Activated B cell treated with CpG ODN at 0.5 μM for 24 hours (primary cell): ENCODE measurements at regions of chr2 and their contacts with region 1.

Region 1: DNA sequence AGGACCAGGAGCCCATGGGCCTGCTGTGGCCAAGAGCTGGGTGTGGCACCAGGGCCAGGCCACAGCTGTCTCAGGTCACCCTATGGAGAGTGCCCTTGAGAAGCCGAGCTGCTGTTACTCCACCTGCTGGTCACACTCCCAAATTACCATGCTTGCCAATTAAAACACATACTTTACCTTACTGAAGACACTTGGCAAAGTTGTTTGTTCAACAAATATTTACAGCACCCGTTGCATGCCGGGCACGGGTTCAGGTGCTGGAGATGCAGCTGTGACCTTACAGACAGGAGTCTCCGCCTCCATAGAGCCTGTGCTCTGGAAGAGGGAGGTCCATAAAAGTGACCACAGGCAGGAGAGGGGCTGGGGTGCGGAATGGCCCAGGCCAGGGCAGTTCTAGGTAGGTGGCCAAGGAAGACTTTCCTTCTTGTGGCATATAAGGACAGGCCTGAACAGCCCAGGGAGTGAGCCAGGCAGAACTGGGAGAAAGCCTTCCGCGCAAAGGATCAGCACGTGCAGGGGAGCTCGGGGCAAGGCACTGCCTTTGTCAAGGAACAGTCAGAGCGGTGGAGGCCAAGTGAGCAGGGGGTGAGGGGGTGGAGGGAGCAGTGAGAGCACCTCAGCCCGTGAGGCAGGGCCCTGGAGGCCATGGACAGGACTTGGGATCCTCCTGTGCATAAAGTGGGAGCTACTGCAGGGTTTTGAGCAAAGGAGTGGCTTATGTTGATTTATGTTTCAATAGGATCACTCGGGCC is 23.6 kb upstream of the RBM44 start:
- DNase-seq: no peak
- ATAC-seq: peak; percentile 77
- H3K4me3 Mint-ChIP-seq: no peak overlapping the region
- H3K27ac Mint-ChIP-seq: no peak overlapping the region
- H3K4me1 Mint-ChIP-seq: no peaks in the 10 kb centered on the region
- H3K27me3 Mint-ChIP-seq: no peaks in the 10 kb centered on the region
- CTCF ChIP-seq: peak; percentile 48

Region 2: DNA sequence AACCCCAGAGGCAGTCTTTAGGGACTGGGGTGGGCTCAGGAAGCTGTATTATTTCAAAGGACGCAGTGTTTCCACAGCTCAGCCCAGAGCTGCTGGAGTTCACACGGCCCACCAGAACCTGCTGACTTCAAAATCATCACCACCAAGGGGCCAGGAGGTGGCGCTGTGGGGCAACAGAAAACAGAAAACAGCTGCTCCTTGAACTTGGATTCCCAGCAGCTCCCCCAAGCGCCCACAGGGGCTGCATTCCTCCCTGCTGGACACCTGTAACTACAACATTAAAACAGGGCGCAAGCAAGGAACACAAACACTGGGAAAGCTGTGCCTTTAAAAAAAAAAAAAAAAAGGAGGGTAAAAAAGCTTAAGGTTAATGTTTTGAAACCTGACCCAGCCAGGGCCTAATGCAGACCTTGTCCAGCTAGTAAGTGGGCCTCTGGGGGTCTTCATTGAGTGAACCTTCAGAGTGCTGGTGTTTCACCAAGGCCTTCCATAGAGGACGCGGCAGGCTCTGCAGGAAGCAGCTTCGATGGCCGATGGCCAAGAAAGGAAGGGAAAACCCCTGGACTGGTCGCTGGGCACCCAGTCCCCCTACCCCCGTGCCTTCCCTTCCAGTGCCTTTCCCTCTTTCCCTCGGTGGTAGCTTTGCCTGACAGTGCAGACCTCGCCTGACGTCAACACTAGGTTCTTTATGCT is 262.1 kb before region 1 on chr2:
- CTCF ChIA-PET with region 1: interaction called, 14 read pairs
- POLR2A ChIA-PET with region 1: no interaction called
- intact Hi-C with region 1: loop called (anchors 1 kb)
- DNase-seq: peak; percentile 58
- ATAC-seq: peak; percentile 64
- H3K4me3 Mint-ChIP-seq: no peak overlapping the region
- H3K27ac Mint-ChIP-seq: no peak overlapping the region
- H3K4me1 Mint-ChIP-seq: no peaks in the 10 kb centered on the region
- H3K27me3 Mint-ChIP-seq: peaks cover 5% of the 10 kb centered on the region
- CTCF ChIP-seq: no peak

Region 3: GRCh38 chr2:237581751-237582746 is 192.9 kb before region 1 on chr2:
- CTCF ChIA-PET with region 1: interaction called, 3 read pairs
- POLR2A ChIA-PET with region 1: no interaction called
- intact Hi-C with region 1: loop called (anchors 1 kb)
- DNase-seq: no peak
- ATAC-seq: peak; percentile 49
- H3K4me3 Mint-ChIP-seq: no peak overlapping the region
- H3K27ac Mint-ChIP-seq: no peak overlapping the region
- H3K4me1 Mint-ChIP-seq: peaks cover 2% of the 10 kb centered on the region
- H3K27me3 Mint-ChIP-seq: peaks cover 10% of the 10 kb centered on the region
- CTCF ChIP-seq: no peak

Region 4: GRCh38 chr2:237624565-237624964 is 150.4 kb before region 1 on chr2:
- CTCF ChIA-PET with region 1: interaction called, 4 read pairs
- POLR2A ChIA-PET with region 1: no interaction called
- intact Hi-C with region 1: loop called (anchors 1 kb)
- DNase-seq: no peak
- ATAC-seq: no peak
- H3K4me3 Mint-ChIP-seq: no peak overlapping the region
- H3K27ac Mint-ChIP-seq: no peak overlapping the region
- H3K4me1 Mint-ChIP-seq: peaks cover 15% of the 10 kb centered on the region
- H3K27me3 Mint-ChIP-seq: peaks cover 10% of the 10 kb centered on the region
- CTCF ChIP-seq: no peak

Region 5: GRCh38 chr2:237879058-237879430 is 104.1 kb after region 1 on chr2:
- CTCF ChIA-PET with region 1: no interaction called
- POLR2A ChIA-PET with region 1: no interaction called
- intact Hi-C with region 1: no loop called
- DNase-seq: no peak
- ATAC-seq: no peak
- H3K4me3 Mint-ChIP-seq: no peak overlapping the region
- H3K27ac Mint-ChIP-seq: no peak overlapping the region
- H3K4me1 Mint-ChIP-seq: no peaks in the 10 kb centered on the region
- H3K27me3 Mint-ChIP-seq: peaks cover 5% of the 10 kb centered on the region
- CTCF ChIP-seq: no peak

Region 6: GRCh38 chr2:238263204-238264071 is 488.5 kb after region 1 on chr2:
- CTCF ChIA-PET with region 1: no interaction called
- POLR2A ChIA-PET with region 1: no interaction called
- intact Hi-C with region 1: loop called (anchors 10 kb)
- DNase-seq: peak; percentile 53
- ATAC-seq: peak; percentile 57
- H3K4me3 Mint-ChIP-seq: no peak overlapping the region
- H3K27ac Mint-ChIP-seq: no peak overlapping the region
- H3K4me1 Mint-ChIP-seq: peaks cover 3% of the 10 kb centered on the region
- H3K27me3 Mint-ChIP-seq: no peaks in the 10 kb centered on the region
- CTCF ChIP-seq: peak; percentile 54